Right ventricle myocardium inferior (tissue), 1 donor: ENCODE measurements at regions of chr3 and their contacts with region 1.

Region 1: GRCh38 chr3:42061713-42062408 is 29.3 kb upstream of the TRAK1 start:
- DNase-seq: peak; percentile 86
- ATAC-seq: peak; percentile 94

Region 2: GRCh38 chr3:42025370-42026138 is 36.3 kb before region 1 on chr3:
- intact Hi-C with region 1: loop called (anchors 2 kb)
- DNase-seq: peak; percentile 93
- ATAC-seq: peak; percentile 98

Region 3: DNA sequence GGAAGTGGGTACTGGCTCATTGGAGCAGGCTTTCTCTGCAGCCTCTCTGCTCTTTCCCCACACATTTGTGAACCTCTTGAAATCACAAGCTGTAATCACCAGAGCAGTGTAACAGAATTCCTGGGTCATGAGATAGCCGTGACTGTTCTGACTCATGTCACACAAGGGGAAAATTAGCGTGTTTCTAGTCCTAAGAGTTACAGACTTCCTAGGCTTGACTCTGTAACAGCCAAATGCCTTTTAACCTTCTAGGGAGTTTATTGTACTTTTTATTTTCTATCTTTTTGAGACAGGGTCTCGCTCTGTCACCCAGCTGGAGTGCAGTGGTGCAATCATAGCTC is 25.4 kb before region 1 on chr3:
- intact Hi-C with region 1: loop called (anchors 2 kb)
- DNase-seq: no peak
- ATAC-seq: peak; percentile 91